IMR-90 (cell line): ENCODE measurements at regions of chr7 and their contacts with region 1.

Region 1: DNA sequence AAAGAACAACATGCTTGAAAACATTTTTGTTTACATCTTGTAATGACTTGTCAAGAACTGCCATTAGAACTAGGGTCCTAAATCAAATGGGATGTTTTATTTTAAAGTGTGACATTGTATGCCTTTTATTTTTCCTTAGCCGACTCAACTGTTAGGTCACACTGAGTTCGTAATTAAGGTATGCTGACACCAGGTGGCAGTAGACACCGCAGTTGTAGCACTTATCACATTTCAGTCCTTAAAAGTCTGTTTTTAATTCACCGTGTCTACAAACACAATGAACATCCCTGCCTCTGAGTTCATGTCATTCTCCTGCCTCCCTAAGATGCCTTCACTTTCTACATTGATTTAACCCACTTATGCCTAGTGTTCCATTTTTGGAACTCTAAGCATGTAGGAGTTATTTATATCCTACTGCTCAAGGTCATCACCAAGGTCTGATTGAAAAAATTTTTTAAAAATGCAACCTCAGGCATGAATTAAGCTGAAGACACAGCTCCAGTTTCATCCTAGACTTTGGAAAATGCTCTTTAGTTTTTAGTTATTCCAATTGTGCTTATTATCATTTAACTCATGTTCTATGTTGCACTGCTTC is 186.1 kb downstream of the BMPER start:
- DNase-seq: peak; percentile 69
- ATAC-seq: 0 out of 2 replicates have a peak, but pooled peaks have one; percentile 16
- H3K4me3 ChIP-seq: no peak overlapping the region
- H3K27ac ChIP-seq: no peak overlapping the region
- H3K4me1 ChIP-seq: peaks cover 3% of the 10 kb centered on the region
- H3K27me3 ChIP-seq: no peaks in the 10 kb centered on the region
- CTCF ChIP-seq: peak; percentile 76
- POLR2A ChIP-seq: no peak
- RAD21 ChIP-seq: peak; percentile 80

Region 2: GRCh38 chr7:33243319-33243881 is 848.0 kb before region 1 on chr7:
- CTCF ChIA-PET with region 1: no interaction called
- POLR2A ChIA-PET with region 1: no interaction called
- dilution Hi-C with region 1: no loop called
- in situ Hi-C with region 1: no loop called
- intact Hi-C with region 1: loop called (anchors 10 kb)
- DNase-seq: peak; percentile 70
- ATAC-seq: peak; percentile 93
- H3K4me3 ChIP-seq: no peak overlapping the region
- H3K27ac ChIP-seq: no peak overlapping the region
- H3K4me1 ChIP-seq: no peaks in the 10 kb centered on the region
- H3K27me3 ChIP-seq: no peaks in the 10 kb centered on the region
- CTCF ChIP-seq: peak; percentile 85
- POLR2A ChIP-seq: no peak
- RAD21 ChIP-seq: peak; percentile 88

Region 3: GRCh38 chr7:33807779-33808482 is 283.5 kb before region 1 on chr7:
- CTCF ChIA-PET with region 1: no interaction called
- POLR2A ChIA-PET with region 1: no interaction called
- dilution Hi-C with region 1: no loop called
- in situ Hi-C with region 1: no loop called
- intact Hi-C with region 1: no loop called
- DNase-seq: peak; percentile 74
- ATAC-seq: peak; percentile 31
- H3K4me3 ChIP-seq: no peak overlapping the region
- H3K27ac ChIP-seq: no peak overlapping the region
- H3K4me1 ChIP-seq: peaks cover 12% of the 10 kb centered on the region
- H3K27me3 ChIP-seq: no peaks in the 10 kb centered on the region; the same call in 1 of the 2 replicates
- CTCF ChIP-seq: peak; percentile 50
- POLR2A ChIP-seq: no peak
- RAD21 ChIP-seq: peak; percentile 45

Region 4: DNA sequence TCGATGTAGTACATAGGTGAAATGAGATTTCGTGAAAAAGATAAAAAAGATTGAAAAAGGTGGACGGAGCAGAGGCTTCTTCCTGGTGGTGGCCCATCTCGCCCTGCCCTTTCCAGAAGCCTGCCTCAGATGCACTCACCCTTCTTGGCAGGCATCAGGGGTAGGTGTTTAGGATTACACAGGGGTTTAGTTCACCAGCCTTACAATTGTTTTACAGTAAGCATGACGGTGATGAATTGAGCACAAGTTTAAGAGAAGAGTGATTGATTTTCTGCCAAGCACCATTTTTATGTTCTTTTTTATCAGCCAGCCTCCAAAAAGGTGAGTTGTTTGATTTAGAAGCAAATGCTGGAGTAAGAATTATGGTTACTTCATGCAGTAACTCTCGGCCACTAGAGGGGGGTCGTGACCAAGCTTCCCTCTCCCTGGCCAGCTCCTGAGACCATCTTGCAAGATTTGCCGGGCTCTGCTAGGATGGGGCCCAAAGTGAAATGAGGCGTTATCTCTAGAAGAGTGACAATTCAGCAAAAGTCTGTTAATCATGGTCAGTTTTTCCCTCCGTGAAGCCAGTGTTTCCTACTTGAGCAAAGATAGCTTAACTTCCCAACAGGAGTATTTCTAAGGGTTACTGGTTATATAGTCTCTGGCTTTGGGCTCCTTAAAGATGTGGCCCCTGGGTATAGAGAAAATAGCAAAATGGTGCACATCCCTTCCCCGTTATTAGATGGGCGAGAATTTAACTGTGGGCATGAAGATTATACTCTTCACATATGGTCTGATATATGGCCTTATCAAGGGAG is 42.8 kb after region 1 on chr7:
- CTCF ChIA-PET with region 1: interaction called, 4 read pairs
- POLR2A ChIA-PET with region 1: no interaction called
- dilution Hi-C with region 1: no loop called
- in situ Hi-C with region 1: no loop called
- intact Hi-C with region 1: loop called (anchors 5 kb)
- DNase-seq: peak; percentile 84
- ATAC-seq: peak; percentile 82
- H3K4me3 ChIP-seq: no peak overlapping the region
- H3K27ac ChIP-seq: peak overlapping the region; percentile 79
- H3K4me1 ChIP-seq: peaks cover 13% of the 10 kb centered on the region; the same call in 1 of the 2 replicates
- H3K27me3 ChIP-seq: no peaks in the 10 kb centered on the region
- CTCF ChIP-seq: peak; percentile 91
- POLR2A ChIP-seq: peak; percentile 52; the same call in 1 of the 2 replicates
- RAD21 ChIP-seq: peak; percentile 96

Region 5: DNA sequence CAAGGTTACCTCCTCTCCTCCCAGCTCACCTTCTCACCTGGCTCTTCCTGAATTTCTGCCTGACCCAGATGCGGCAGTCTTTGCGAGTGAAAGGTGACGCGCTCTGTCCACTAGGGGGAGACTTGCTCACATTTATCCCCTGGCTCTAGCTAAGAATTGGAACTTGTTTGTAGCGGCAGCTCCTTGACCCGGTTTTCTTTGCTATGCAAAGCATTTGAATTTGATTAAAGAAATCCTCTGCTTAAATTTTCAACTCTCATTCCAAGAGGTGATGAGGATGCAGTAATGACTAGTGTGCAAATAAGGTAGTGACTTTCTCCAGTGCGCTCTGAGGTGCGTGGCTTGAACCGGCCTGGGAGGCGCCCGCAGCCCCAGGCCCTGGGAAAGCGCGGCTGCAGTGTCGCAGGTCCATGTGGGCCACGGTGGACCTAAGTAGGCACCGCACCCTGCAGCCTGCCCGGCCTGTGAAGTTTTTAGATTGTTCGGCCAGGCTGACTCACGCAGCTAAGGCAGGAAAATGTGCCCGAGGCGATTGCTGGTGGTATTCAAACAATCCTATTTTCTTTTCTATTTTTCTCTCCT is 229.7 kb after region 1 on chr7:
- CTCF ChIA-PET with region 1: no interaction called
- POLR2A ChIA-PET with region 1: no interaction called
- dilution Hi-C with region 1: no loop called
- in situ Hi-C with region 1: no loop called
- intact Hi-C with region 1: loop called (anchors 1 kb)
- DNase-seq: peak; percentile 58
- ATAC-seq: peak; percentile 93
- H3K4me3 ChIP-seq: no peak overlapping the region
- H3K27ac ChIP-seq: no peak overlapping the region
- H3K4me1 ChIP-seq: peaks cover 5% of the 10 kb centered on the region
- H3K27me3 ChIP-seq: no peaks in the 10 kb centered on the region
- CTCF ChIP-seq: peak; percentile 80
- POLR2A ChIP-seq: no peak
- RAD21 ChIP-seq: peak; percentile 66